ENCODE measurements at regions of chr3 and their contacts with region 1.

Region 1: GRCh38 chr3:171829841-171830517 is 13.2 kb upstream of the TMEM212 start:
- DNase-seq: peak; percentile 92
- ATAC-seq: peak; percentile 91

Region 2: GRCh38 chr3:170848292-170848917 is 981.6 kb before region 1 on chr3:
- intact Hi-C with region 1: no loop called
- DNase-seq: no peak
- ATAC-seq: no peak

Region 3: GRCh38 chr3:172129870-172130683 is 300.1 kb after region 1 on chr3:
- intact Hi-C with region 1: loop called (anchors 10 kb)
- DNase-seq: peak; percentile 93
- ATAC-seq: peak; percentile 90

Region 4: DNA sequence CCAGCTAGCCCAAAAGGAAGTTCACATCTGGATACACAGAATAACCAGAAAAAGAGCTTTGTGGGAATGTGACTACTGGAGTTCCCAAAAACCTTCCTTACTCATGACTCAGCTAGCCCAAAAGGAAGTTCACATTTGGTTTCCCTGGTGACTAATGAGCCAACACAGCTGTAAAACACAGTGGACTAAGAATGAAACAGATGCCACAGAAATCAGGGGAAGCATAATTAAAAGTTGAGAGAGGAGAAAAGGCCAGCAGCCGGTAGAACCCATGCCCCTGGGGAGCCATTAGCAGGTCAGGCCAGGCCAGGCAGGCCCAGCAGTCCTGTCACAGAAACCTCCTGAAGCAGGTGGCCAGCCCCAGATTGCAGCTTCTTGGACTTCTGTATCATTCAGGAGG is 488.0 kb after region 1 on chr3:
- intact Hi-C with region 1: loop called (anchors 10 kb)
- DNase-seq: no peak
- ATAC-seq: peak; percentile 72